T-cell (primary cell): ENCODE measurements at regions of chr14 and their contacts with region 1.

Region 1: DNA sequence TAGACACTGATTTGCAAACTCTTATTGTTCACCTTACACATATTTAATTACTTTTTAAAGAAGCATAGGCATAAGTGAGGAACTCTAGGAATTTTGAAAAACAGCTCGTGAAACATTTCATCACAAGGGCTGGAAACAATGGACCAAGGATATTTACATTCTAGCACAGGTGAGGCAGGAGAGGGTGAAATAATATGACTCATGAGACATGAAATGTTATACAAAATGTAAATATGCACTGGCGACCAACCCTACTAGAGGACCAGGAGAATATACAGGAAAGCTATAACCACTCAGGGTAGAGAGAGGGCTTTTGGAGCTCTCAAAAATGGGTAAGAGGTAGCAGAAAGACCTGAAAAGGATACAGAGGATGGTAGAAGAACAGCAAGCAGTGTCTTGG is 115.3 kb downstream of the PTGER2 start:
- DNase-seq: no peak
- ATAC-seq: no peak
- H3K4me3 ChIP-seq: no peak overlapping the region
- H3K4me3 Mint-ChIP-seq: no peak overlapping the region
- H3K27ac ChIP-seq: no peak overlapping the region
- H3K27ac Mint-ChIP-seq: no peak overlapping the region
- H3K4me1 ChIP-seq: no peaks in the 10 kb centered on the region
- H3K4me1 Mint-ChIP-seq: no peaks in the 10 kb centered on the region
- H3K27me3 ChIP-seq: no peaks in the 10 kb centered on the region
- H3K27me3 Mint-ChIP-seq: no peaks in the 10 kb centered on the region

Region 2: DNA sequence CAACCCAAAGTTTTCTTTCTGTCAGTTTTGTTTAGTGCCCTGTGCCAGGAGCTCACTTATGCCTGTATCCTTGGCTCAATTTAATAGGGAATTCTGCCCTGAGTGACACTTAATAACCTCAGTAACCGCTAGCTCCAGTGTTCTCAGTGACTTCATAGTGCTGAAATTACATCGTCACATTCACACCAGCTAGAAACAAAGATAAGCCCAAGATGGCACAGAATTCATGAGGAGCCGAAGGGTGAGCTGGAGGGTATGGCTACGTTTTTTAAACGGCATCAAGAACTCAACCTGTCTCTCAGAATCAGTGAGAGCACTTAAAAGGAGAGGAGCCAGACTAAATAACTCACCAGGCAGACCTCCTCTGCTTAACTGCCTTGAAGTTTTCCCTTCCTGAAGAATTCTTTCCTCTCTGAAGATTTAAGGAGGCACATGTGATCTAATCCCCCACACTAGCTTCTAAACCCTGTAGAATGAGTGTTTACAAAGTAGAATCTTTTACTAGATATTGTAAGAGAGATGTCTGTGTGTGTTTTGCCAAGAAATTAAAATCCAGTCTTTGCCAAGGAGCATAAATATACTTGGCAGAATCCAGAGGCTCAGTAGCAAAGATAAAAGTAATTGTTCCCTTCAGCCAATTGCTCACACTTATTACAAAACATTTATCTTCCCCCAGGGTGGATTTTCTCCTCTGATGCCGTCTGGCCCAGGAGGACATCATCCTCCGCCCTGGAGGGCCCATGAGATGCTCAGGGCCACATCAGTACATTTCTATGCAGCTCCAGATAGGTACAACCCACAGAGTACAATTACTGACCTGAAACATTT is 78.0 kb before region 1 on chr14:
- CTCF ChIA-PET with region 1: no interaction called
- POLR2A ChIA-PET with region 1: no interaction called
- DNase-seq: peak in 2 of 35 experiments; percentile 1 to 23
- ATAC-seq: peak; percentile 39 to 69 (median 46)
- H3K4me3 ChIP-seq: peak overlapping the region in 1 of 2 donors; percentile 9
- H3K4me3 Mint-ChIP-seq: peak overlapping the region; percentile 29 to 80 (median 61)
- H3K27ac ChIP-seq: peak overlapping the region; percentile 70
- H3K27ac Mint-ChIP-seq: peak overlapping the region; percentile 98
- H3K4me1 ChIP-seq: peaks cover 33 to 42% of the 10 kb centered on the region in 2 experiments
- H3K4me1 Mint-ChIP-seq: peaks cover 68 to 79% (median 73%) of the 10 kb centered on the region in 3 donors
- H3K27me3 ChIP-seq: no peaks in the 10 kb centered on the region
- H3K27me3 Mint-ChIP-seq: no peaks in the 10 kb centered on the region

Region 3: GRCh38 chr14:52485350-52485960 is 56.0 kb after region 1 on chr14:
- CTCF ChIA-PET with region 1: no interaction called
- POLR2A ChIA-PET with region 1: interaction called in 1 of 2 experiments, 10 read pairs
- DNase-seq: no peak
- ATAC-seq: no peak
- H3K4me3 ChIP-seq: no peak overlapping the region
- H3K4me3 Mint-ChIP-seq: no peak overlapping the region
- H3K27ac ChIP-seq: no peak overlapping the region
- H3K27ac Mint-ChIP-seq: no peak overlapping the region
- H3K4me1 ChIP-seq: no peaks in the 10 kb centered on the region
- H3K4me1 Mint-ChIP-seq: peaks cover 0 to 4% (median 0%) of the 10 kb centered on the region in 3 donors
- H3K27me3 ChIP-seq: no peaks in the 10 kb centered on the region
- H3K27me3 Mint-ChIP-seq: no peaks in the 10 kb centered on the region